ENCODE measurements at regions of chr18 and their contacts with region 1.

Region 1: DNA sequence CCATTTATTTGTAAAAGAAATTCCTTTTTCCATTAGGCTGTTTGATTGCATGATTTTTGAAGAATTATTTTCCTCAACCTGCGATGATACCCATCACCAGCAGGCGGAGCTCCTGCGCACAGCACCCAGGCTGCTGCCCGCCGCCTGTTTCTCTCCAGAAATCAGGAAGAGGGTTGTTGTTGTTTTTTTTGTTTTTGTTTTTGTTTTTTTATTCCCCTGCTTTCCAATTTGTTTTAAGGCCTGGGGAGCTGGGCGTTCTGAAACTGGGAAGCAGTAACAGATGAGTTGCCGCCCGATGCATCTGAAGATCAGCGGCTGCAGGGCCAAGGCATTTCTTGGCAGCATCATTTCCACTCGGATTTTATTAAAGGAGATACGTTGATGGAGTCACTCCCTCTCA is 132.1 kb downstream of the MBP start:
- DNase-seq: peak; percentile 32 to 52
- H3K4me3 ChIP-seq: peak overlapping the region; percentile 23 to 40 (median 27)
- H3K27ac ChIP-seq: no peak overlapping the region
- H3K4me1 ChIP-seq: no peaks in the 10 kb centered on the region
- H3K27me3 ChIP-seq: no peaks in the 10 kb centered on the region
- CTCF ChIP-seq: peak; percentile 92 to 97 (median 93)
- POLR2A ChIP-seq: no peak

Region 2: GRCh38 chr18:75334869-75335268 is 1665.7 kb before region 1 on chr18:
- intact Hi-C with region 1: no loop called
- DNase-seq: no peak
- H3K4me3 ChIP-seq: no peak overlapping the region
- H3K27ac ChIP-seq: no peak overlapping the region
- H3K4me1 ChIP-seq: no peaks in the 10 kb centered on the region
- H3K27me3 ChIP-seq: no peaks in the 10 kb centered on the region
- CTCF ChIP-seq: no peak
- POLR2A ChIP-seq: no peak

Region 3: GRCh38 chr18:76721207-76721996 is 279.1 kb before region 1 on chr18:
- intact Hi-C with region 1: no loop called
- DNase-seq: no peak
- H3K4me3 ChIP-seq: no peak overlapping the region
- H3K27ac ChIP-seq: no peak overlapping the region
- H3K4me1 ChIP-seq: no peaks in the 10 kb centered on the region
- H3K27me3 ChIP-seq: no peaks in the 10 kb centered on the region
- CTCF ChIP-seq: no peak
- POLR2A ChIP-seq: no peak

Region 4: GRCh38 chr18:76922107-76922506 is 78.4 kb before region 1 on chr18:
- intact Hi-C with region 1: no loop called
- DNase-seq: no peak
- H3K4me3 ChIP-seq: no peak overlapping the region
- H3K27ac ChIP-seq: no peak overlapping the region
- H3K4me1 ChIP-seq: no peaks in the 10 kb centered on the region
- H3K27me3 ChIP-seq: no peaks in the 10 kb centered on the region
- CTCF ChIP-seq: peak in 2 of 3 donors; percentile 44 to 60
- POLR2A ChIP-seq: no peak

Region 5: GRCh38 chr18:76938619-76939018 is 61.9 kb before region 1 on chr18:
- intact Hi-C with region 1: loop called (anchors 2 kb)
- DNase-seq: no peak
- H3K4me3 ChIP-seq: no peak overlapping the region
- H3K27ac ChIP-seq: no peak overlapping the region
- H3K4me1 ChIP-seq: no peaks in the 10 kb centered on the region
- H3K27me3 ChIP-seq: no peaks in the 10 kb centered on the region
- CTCF ChIP-seq: no peak
- POLR2A ChIP-seq: no peak

Region 6: DNA sequence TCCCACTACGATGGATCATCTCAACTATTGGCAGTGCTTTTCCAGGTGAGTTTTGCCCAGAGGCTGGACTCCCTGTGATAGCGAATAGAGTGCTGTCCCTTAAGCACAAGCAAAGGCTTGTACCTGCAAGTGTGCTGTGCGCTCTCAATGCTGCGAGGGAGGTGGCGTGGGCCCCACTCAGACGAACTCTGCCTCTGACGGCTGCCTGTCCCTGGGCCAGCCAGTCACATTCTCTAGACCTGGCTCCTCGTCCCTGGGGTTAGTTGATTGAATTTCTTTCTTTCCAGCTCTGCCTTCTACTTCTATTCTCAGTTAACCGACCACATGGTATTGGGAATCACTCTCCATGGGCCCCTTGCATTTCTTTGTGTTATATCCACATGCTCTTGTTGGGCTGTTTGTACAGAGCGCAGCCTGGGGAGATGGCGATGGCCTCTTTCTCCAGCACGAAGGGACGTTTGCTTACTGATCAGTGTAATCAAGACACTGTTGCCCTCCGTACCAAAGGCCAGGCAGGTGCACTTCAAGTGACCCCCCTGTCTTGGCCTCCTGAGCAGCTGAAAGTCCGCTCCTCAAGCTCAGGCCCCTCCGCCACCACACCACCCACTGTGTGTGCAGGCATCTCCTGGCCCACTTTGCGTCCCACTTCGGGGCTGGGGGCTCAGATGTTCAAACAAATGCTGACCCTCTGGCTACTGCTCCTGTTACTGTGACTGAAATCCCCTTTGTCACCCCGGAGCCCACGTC is 26.8 kb before region 1 on chr18:
- intact Hi-C with region 1: loop called (anchors 1 kb)
- DNase-seq: no peak
- H3K4me3 ChIP-seq: no peak overlapping the region
- H3K27ac ChIP-seq: no peak overlapping the region
- H3K4me1 ChIP-seq: no peaks in the 10 kb centered on the region
- H3K27me3 ChIP-seq: no peaks in the 10 kb centered on the region
- CTCF ChIP-seq: no peak
- POLR2A ChIP-seq: no peak

Region 7: DNA sequence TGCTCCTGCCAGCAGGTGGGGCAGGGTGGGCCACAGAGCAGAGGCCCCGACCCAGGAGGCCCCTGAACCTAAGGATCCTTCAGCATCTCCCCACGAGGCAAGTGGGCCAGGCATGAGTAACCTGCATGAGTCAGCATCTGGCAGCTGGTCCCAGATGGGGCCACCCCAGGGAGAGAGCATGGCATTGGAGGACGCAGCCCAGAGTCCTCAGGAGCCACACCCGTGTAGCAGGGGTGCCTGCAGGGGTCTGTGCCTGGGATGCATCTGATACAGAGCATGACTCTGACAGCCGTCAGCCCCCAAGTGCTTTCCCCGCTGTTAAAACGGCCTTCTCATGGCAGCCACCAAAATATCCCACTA is 1793.5 kb after region 1 on chr18:
- intact Hi-C with region 1: no loop called
- DNase-seq: no peak
- H3K4me3 ChIP-seq: no peak overlapping the region
- H3K27ac ChIP-seq: no peak overlapping the region
- H3K4me1 ChIP-seq: no peaks in the 10 kb centered on the region
- H3K27me3 ChIP-seq: peaks cover 0 to 24% of the 10 kb centered on the region in 2 donors
- CTCF ChIP-seq: no peak
- POLR2A ChIP-seq: no peak

Measured in breast epithelium (tissue), 4 donors.